Caco-2 (cell line): ENCODE measurements at regions of chr19 and their contacts with region 1.

Region 1: GRCh38 chr19:46211201-46211881 is 18.2 kb upstream of the IGFL1 start:
- DNase-seq: peak; percentile 89 to 95
- H3K4me3 ChIP-seq: no peak overlapping the region
- H3K4me3 Mint-ChIP-seq: peak overlapping the region; percentile 55
- H3K27ac Mint-ChIP-seq: peak overlapping the region; percentile 72
- H3K4me1 ChIP-seq: peaks cover 52% of the 10 kb centered on the region
- H3K4me1 Mint-ChIP-seq: peaks cover 48% of the 10 kb centered on the region
- H3K27me3 ChIP-seq: no peaks in the 10 kb centered on the region
- H3K27me3 Mint-ChIP-seq: no peaks in the 10 kb centered on the region
- CTCF ChIP-seq: no peak

Region 2: GRCh38 chr19:46192992-46193650 is 18.2 kb before region 1 on chr19:
- CTCF ChIA-PET with region 1: interaction called, 4 read pairs
- POLR2A ChIA-PET with region 1: interaction called, 4 read pairs
- intact Hi-C with region 1: loop called (anchors 1 kb)
- DNase-seq: peak; percentile 83 to 85
- H3K4me3 ChIP-seq: no peak overlapping the region
- H3K4me3 Mint-ChIP-seq: peak overlapping the region; percentile 56
- H3K27ac Mint-ChIP-seq: peak overlapping the region; percentile 87
- H3K4me1 ChIP-seq: peaks cover 33% of the 10 kb centered on the region
- H3K4me1 Mint-ChIP-seq: peaks cover 41% of the 10 kb centered on the region
- H3K27me3 ChIP-seq: no peaks in the 10 kb centered on the region
- H3K27me3 Mint-ChIP-seq: no peaks in the 10 kb centered on the region
- CTCF ChIP-seq: no peak

Region 3: DNA sequence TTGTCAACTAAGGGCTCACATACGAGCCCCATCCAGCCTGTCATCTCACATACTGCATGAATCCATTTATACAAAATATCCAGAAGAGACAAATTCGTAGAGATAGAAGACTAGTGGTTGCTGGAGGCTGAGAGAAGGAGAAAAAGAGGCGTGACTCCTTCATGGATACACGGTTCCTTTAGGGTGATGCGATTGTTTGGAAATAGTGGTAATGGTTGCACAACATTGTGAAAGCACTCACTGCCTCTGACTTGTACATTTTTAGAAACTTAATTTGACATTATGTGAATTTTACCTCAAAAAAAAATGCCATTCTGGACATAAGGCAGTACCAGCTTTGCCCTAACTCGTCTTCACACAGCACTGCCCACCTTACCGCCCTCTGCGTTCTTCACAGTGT is 45.5 kb after region 1 on chr19:
- CTCF ChIA-PET with region 1: no interaction called
- POLR2A ChIA-PET with region 1: no interaction called
- intact Hi-C with region 1: loop called (anchors 5 kb)
- DNase-seq: no peak
- H3K4me3 ChIP-seq: no peak overlapping the region
- H3K4me3 Mint-ChIP-seq: no peak overlapping the region
- H3K27ac Mint-ChIP-seq: no peak overlapping the region
- H3K4me1 ChIP-seq: no peaks in the 10 kb centered on the region
- H3K4me1 Mint-ChIP-seq: peaks cover 6% of the 10 kb centered on the region
- H3K27me3 ChIP-seq: no peaks in the 10 kb centered on the region
- H3K27me3 Mint-ChIP-seq: no peaks in the 10 kb centered on the region
- CTCF ChIP-seq: no peak